PC-3 (cell line): ENCODE measurements at regions of chrX and their contacts with region 1.

Region 1: DNA sequence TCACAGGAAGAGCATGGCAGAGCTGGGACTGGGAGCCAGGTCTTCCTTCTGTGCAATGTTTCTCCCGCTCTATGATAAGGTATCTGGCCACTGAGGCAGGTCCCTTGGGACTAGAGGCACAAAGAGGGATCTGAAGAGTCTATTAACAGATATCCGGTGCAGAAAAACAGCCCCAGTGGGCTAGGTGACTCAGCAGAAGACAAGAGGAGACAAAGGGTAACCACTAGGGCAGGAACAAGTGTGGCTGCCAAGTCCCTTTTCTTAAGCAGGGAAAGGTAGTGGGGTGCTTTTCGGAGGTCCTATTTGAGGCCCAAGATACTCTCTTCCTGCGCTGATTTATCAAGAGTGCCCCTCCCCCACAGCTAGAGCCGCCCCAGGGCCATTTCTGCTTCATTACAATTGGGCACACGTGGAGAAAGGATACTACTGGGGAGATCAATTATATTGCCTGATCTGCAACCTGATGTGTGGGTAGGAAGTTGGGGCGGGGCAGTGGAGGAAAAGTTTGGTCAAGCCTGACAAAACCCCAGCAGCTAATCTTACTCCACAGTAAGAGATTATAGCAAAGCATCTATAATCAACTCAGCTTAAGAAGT is at the start of gene DGAT2L6:
- DNase-seq: no peak
- ATAC-seq: no peak
- H3K4me3 ChIP-seq: no peak within 1 kb of the TSS
- H3K27ac ChIP-seq: no peak within 1 kb of the TSS
- H3K4me1 ChIP-seq: peaks cover 33% of the 10 kb centered on the region
- H3K27me3 ChIP-seq: no peaks in the 10 kb centered on the region
- CTCF ChIP-seq: no peak
- total RNA-seq, gene DGAT2L6: not detected in 2 replicates

Region 2: GRCh38 chrX:70262952-70263567 is 86.0 kb after region 1 on chrX:
- CTCF ChIA-PET with region 1: interaction called, 11 read pairs
- POLR2A ChIA-PET with region 1: no interaction called
- intact Hi-C with region 1: no loop called
- DNase-seq: peak; percentile 80
- ATAC-seq: peak; percentile 92
- H3K4me3 ChIP-seq: no peak overlapping the region
- H3K27ac ChIP-seq: no peak overlapping the region
- H3K4me1 ChIP-seq: no peaks in the 10 kb centered on the region
- H3K27me3 ChIP-seq: no peaks in the 10 kb centered on the region
- CTCF ChIP-seq: peak; percentile 80

Region 3: GRCh38 chrX:70618467-70618866 is 441.4 kb after region 1 on chrX:
- CTCF ChIA-PET with region 1: no interaction called
- POLR2A ChIA-PET with region 1: no interaction called
- intact Hi-C with region 1: no loop called
- DNase-seq: no peak
- ATAC-seq: no peak
- H3K4me3 ChIP-seq: no peak overlapping the region
- H3K27ac ChIP-seq: no peak overlapping the region
- H3K4me1 ChIP-seq: no peaks in the 10 kb centered on the region
- H3K27me3 ChIP-seq: peaks cover 14% of the 10 kb centered on the region
- CTCF ChIP-seq: no peak